Dendritic cell treated with granulocyte-macrophage colony-stimulating factor and Interleukin-4, amounts not matched to agents 40 ng/mL and 50 ng/mL, for 4 days (primary cell): ENCODE measurements at regions of chrX and their contacts with region 1.

Region 1: DNA sequence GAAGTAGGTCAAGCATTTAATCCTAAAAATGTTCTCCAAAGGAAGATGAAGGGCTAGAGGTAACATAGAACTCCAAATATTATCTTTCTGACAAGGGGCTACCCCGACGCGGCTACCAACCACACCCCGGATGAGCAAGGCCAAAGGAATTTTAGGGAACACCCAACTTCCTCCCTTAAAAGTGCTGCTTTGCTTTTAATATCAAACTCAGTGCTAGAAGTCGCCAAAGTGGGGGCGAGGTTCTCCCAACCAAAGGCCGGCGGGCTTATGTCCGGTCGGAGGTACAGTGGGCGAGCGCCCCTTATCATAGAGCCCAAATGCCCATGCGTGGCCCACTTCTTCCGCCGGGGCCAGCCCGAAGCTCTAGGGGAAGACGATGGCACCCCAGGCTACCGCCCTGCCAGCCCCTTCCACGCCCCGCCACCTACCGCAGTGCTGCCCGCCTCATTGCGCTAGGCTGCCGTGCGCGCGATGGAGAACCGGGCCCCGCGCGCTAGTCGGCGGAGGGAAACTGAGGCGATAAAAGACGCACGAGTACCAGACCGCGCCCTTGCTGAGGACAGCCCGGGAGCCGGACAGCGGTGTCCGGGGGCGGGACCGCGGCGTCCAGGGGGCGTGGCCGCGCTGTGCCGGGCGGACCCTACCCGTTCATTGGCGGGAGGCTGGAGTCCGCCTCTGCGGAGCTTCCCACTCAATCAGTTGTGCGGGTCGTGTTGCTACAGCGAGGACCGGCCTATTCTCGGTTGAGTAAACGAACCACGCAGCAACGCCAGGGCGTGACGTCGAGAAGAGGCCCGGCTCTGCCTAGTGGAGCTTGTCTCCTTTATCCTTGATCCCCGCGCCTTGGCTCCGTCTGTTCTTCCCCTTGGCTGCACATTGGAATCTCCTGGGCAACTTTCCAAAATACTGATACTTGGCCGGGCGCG is at the start of gene ACOT9:
- H3K4me3 Mint-ChIP-seq: peak within 1 kb of the TSS; percentile 85
- H3K27ac Mint-ChIP-seq: peak within 1 kb of the TSS; percentile 92
- H3K4me1 Mint-ChIP-seq: peaks cover 24% of the 10 kb centered on the region
- H3K27me3 Mint-ChIP-seq: no peaks in the 10 kb centered on the region

Region 2: GRCh38 chrX:23694606-23695005 is 48.4 kb before region 1 on chrX:
- intact Hi-C with region 1: loop called (anchors 10 kb)
- H3K4me3 Mint-ChIP-seq: no peak overlapping the region
- H3K27ac Mint-ChIP-seq: no peak overlapping the region
- H3K4me1 Mint-ChIP-seq: peaks cover 4% of the 10 kb centered on the region
- H3K27me3 Mint-ChIP-seq: no peaks in the 10 kb centered on the region

Region 3: DNA sequence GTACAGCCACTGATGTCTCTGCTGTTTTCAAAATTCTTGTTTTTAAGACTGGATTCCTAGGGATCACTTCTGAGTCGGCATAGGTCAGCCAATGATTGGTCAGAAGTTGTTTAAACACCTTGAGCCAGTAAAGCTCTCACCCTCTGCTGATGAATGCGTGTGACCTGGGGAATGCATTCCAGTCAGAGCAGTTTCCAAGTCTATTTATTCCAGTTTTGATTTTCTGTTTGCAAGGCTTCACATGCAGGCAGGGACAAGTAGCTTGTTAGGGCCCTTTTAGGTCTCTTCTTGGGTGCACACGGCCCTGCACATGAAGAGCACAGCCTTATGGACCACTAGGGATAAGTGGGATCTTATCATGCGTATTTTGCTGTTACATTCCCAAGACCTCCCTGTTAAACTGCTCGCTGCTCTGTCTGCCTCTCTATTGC is 237.1 kb after region 1 on chrX:
- intact Hi-C with region 1: no loop called
- H3K4me3 Mint-ChIP-seq: no peak overlapping the region
- H3K27ac Mint-ChIP-seq: no peak overlapping the region
- H3K4me1 Mint-ChIP-seq: no peaks in the 10 kb centered on the region
- H3K27me3 Mint-ChIP-seq: no peaks in the 10 kb centered on the region

Region 4: GRCh38 chrX:24054182-24055042 is 311.5 kb after region 1 on chrX and contains the start of gene EIF2S3:
- intact Hi-C with region 1: loop called (anchors 2 kb)
- H3K4me3 Mint-ChIP-seq: peak within 1 kb of the TSS; percentile 87
- H3K27ac Mint-ChIP-seq: peak within 1 kb of the TSS; percentile 99
- H3K4me1 Mint-ChIP-seq: no peaks in the 10 kb centered on the region
- H3K27me3 Mint-ChIP-seq: no peaks in the 10 kb centered on the region